Sciatic nerve (tissue), 2 donors: ENCODE measurements at regions of chr2 and their contacts with region 1.

Region 1: DNA sequence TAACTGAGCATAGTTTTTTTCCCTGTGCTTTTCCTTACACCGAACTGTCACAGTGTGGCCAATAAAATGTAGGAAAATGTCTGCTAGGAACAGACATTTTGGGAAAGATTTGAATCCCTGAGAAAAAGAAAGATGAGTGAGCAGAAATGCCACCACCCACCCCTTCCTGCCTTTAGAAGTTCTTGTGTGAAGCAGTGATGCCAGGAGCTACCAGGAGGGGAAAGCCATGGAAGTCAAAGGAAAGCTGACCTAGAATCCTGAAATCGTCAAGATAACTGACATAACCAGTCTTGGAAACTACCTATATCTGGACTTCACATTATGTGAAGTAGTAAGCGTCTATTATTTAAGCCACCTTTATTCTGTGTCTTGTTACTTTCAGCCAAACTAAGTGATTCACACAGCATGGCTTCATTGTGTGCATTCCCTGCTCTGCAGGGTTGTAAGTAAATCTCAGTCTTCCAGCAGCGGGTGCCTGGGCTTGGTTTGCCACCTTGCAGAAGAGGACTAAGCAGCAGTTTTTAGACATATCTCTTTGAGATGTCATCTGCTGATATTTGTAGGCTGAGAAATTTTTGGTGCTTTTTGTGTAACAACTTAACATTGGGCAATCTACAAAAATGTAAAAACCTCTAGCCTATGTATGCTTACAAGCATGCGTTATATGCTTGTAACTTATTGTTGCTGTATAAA is 11.3 kb upstream of the SPRED2 start:
- DNase-seq: no peak
- ATAC-seq: no peak

Region 2: DNA sequence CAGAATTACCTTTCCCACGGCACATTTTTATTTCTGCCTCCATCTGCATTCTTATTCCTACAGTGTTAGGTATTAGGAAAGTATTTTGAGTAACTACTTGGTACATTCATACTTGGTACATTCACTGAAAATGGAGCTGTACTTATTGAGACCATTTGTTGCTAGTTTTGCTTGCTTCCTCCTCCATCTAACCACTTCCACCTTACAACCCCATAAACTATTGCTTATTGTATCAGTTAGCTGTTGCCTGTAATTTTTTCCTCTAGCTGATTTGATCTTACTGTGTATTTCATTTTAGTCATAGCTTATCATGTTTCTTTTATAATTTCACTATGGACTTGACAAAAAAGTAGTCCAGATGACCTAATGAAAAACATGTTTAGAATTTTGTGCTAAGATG is 868.8 kb before region 1 on chr2:
- intact Hi-C with region 1: loop called (anchors 5 kb)
- DNase-seq: no peak
- ATAC-seq: no peak

Region 3: GRCh38 chr2:65514555-65515195 is 71.0 kb after region 1 on chr2:
- intact Hi-C with region 1: no loop called
- DNase-seq: no peak
- ATAC-seq: no peak

Region 4: GRCh38 chr2:65647249-65647842 is 203.7 kb after region 1 on chr2:
- intact Hi-C with region 1: no loop called
- DNase-seq: no peak
- ATAC-seq: no peak